Dendritic cell treated with granulocyte-macrophage colony-stimulating factor and Interleukin-4, amounts not matched to agents 40 ng/mL and 50 ng/mL, for 4 days (primary cell): ENCODE measurements at regions of chr11 and their contacts with region 1.

Region 1: DNA sequence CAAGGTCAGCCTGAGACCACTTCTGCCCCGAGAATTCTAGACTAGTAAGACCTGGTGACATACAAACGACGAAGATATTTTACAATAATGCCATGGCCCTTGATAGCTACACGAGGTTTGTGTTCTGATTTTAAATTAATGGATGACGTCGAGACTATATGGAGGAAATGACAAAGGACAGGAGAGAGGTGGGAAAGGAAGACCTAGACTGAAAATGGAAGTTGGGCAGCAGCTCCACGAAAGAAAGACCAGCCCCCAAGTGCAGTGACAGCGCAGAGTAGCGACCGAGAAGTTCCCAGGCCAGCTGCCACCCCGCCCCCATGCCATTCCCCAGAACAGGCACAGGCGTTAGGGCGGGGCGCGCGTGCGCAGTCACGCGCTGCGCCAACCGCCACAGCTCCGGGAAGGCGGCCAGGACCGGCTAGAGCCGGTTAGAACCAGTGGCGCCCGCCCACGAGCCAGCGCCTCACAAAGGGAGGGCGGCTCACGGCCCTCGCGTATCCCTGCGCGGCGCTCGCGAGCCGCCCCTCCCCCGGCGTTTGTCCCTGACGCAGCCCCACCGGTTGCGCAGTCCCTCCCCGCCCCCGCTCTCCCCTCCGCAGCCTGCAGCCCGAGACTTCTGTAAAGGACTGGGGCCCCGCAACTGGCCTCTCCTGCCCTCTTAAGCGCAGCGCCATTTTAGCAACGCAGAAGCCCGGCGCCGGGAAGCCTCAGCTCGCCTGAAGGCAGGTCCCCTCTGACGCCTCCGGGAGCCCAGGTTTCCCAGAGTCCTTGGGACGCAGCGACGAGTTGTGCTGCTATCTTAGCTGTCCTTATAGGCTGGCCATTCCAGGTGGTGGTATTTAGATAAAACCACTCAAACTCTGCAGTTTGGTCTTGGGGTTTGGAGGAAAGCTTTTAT is 1.5 kb upstream of the MALAT1 start:
- H3K4me3 Mint-ChIP-seq: no peak overlapping the region
- H3K27ac Mint-ChIP-seq: no peak overlapping the region
- H3K4me1 Mint-ChIP-seq: peaks cover 41% of the 10 kb centered on the region
- H3K27me3 Mint-ChIP-seq: no peaks in the 10 kb centered on the region

Region 2: GRCh38 chr11:65274735-65275682 is 222.4 kb before region 1 on chr11:
- intact Hi-C with region 1: no loop called
- H3K4me3 Mint-ChIP-seq: no peak overlapping the region
- H3K27ac Mint-ChIP-seq: no peak overlapping the region
- H3K4me1 Mint-ChIP-seq: peaks cover 12% of the 10 kb centered on the region
- H3K27me3 Mint-ChIP-seq: no peaks in the 10 kb centered on the region

Region 3: GRCh38 chr11:65382033-65382807 is 115.2 kb before region 1 on chr11 and contains the start of gene SLC25A45:
- intact Hi-C with region 1: loop called (anchors 5 kb)
- H3K4me3 Mint-ChIP-seq: peak within 1 kb of the TSS; percentile 82
- H3K27ac Mint-ChIP-seq: peak within 1 kb of the TSS; percentile 98
- H3K4me1 Mint-ChIP-seq: peaks cover 78% of the 10 kb centered on the region
- H3K27me3 Mint-ChIP-seq: no peaks in the 10 kb centered on the region

Region 4: GRCh38 chr11:65418711-65419459 is 78.5 kb before region 1 on chr11:
- intact Hi-C with region 1: loop called (anchors 2 kb)
- H3K4me3 Mint-ChIP-seq: peak overlapping the region; percentile 78
- H3K27ac Mint-ChIP-seq: peak overlapping the region; percentile 100
- H3K4me1 Mint-ChIP-seq: peaks cover 67% of the 10 kb centered on the region
- H3K27me3 Mint-ChIP-seq: no peaks in the 10 kb centered on the region

Region 5: GRCh38 chr11:65477149-65477965 is 20.0 kb before region 1 on chr11:
- intact Hi-C with region 1: loop called (anchors 2 kb)
- H3K4me3 Mint-ChIP-seq: peak overlapping the region; percentile 95
- H3K27ac Mint-ChIP-seq: peak overlapping the region; percentile 100
- H3K4me1 Mint-ChIP-seq: peaks cover 45% of the 10 kb centered on the region
- H3K27me3 Mint-ChIP-seq: no peaks in the 10 kb centered on the region